Left cardiac atrium (tissue), 4 donors: ENCODE measurements at regions of chr9 and their contacts with region 1.

Region 1: GRCh38 chr9:33374634-33375213 is 27.6 kb downstream of the AQP7 start:
- DNase-seq: peak; percentile 81
- ATAC-seq: peak; percentile 72 to 87

Region 2: GRCh38 chr9:33306037-33306436 is 68.7 kb before region 1 on chr9:
- intact Hi-C with region 1: no loop called
- DNase-seq: no peak
- ATAC-seq: peak in 1 of 2 donors; percentile 50

Region 3: DNA sequence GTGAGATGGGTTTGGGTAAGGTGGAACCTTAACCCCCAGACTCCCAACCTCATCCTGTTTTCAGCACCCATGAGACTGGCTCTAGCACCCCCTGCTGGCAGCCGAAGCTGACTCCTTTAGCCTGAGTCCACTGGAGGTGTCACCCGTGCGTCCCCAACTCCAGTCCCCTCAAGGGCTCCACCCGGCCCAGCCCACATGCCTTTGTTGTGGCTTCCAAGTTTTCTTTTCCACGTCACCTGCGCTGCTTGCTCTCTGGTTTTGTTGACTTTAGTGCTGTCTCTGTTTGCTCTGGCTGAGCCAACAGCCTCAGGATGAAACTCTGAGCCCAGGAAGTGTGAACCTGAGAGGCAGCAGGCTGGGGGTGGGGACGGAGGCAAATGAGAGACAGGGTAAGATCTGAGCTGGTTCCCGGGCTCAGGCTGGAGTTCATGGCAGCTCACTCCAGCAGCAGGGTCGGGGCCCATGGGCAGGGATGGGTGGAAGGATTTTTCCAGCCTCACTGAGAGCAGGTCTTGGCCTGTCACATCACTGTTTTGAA is 40.8 kb after region 1 on chr9:
- intact Hi-C with region 1: loop called (anchors 1 to 5 kb)
- DNase-seq: peak; percentile 83
- ATAC-seq: peak; percentile 85

Region 4: DNA sequence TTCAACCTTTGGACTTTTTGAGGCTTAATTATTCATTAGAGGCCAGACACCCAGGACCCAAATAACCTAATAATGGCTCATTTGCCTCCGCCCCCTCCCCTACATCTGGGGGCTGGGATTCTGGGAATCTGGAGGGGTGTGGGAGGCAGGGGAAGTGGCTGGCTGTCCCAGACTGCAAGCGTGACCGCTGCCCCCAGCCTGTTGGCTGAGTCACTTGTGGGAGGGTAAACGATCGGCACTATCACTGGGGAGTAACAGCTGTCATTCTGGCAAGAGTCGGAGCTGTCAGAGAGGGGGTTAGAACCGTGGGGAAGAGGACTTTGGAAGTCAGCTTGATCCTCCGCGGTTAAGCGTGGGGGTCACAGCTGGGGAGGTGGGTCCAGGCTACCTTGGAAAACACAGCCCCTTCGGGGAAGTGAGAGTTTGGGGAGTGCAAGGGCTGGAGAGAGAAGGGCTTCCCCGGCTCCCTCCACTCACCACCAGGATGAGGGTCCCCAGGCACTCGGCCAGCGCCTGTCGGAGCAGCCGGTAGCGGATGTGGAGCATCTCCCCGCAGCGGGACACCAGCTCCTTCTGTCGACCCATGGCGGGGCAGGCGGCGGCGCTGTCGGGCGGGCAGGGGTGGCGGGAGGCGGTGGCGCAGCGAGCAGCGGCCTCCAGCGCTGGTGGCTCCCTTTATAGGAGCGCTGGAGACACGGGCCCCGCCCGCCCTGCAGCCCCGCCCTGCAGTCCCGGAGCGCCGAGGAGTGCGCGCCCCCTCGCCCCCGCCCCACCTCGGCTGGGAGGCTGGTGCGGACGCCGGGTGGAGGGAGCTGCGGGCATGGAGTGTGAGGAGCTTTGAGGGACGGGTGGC is 72.4 kb after region 1 on chr9 and contains the start of gene AQP3:
- intact Hi-C with region 1: loop called in 1 of 2 experiments (anchors 10 kb)
- DNase-seq: peak; percentile 75
- ATAC-seq: peak; percentile 87 to 89
- total RNA-seq, gene AQP3: 14.0 to 22.5 TPM